Activated CD8-positive, alpha-beta T cell treated with anti-CD3 and anti-CD28 coated beads for 36 hours (primary cell): ENCODE measurements at regions of chr12 and their contacts with region 1.

Region 1: GRCh38 chr12:108618079-108618952 is 15.4 kb downstream of the SELPLG start:
- DNase-seq: peak; percentile 83
- ATAC-seq: peak; percentile 19
- H3K4me3 Mint-ChIP-seq: no peak overlapping the region
- H3K27ac Mint-ChIP-seq: peak overlapping the region; percentile 45
- H3K4me1 Mint-ChIP-seq: peaks cover 47% of the 10 kb centered on the region
- H3K27me3 Mint-ChIP-seq: no peaks in the 10 kb centered on the region
- CTCF ChIP-seq: peak; percentile 99

Region 2: GRCh38 chr12:108367436-108367835 is 250.9 kb before region 1 on chr12:
- CTCF ChIA-PET with region 1: no interaction called
- POLR2A ChIA-PET with region 1: no interaction called
- intact Hi-C with region 1: no loop called
- DNase-seq: no peak
- ATAC-seq: no peak
- H3K4me3 Mint-ChIP-seq: no peak overlapping the region
- H3K27ac Mint-ChIP-seq: no peak overlapping the region
- H3K4me1 Mint-ChIP-seq: no peaks in the 10 kb centered on the region
- H3K27me3 Mint-ChIP-seq: peaks cover 4% of the 10 kb centered on the region
- CTCF ChIP-seq: no peak

Region 3: DNA sequence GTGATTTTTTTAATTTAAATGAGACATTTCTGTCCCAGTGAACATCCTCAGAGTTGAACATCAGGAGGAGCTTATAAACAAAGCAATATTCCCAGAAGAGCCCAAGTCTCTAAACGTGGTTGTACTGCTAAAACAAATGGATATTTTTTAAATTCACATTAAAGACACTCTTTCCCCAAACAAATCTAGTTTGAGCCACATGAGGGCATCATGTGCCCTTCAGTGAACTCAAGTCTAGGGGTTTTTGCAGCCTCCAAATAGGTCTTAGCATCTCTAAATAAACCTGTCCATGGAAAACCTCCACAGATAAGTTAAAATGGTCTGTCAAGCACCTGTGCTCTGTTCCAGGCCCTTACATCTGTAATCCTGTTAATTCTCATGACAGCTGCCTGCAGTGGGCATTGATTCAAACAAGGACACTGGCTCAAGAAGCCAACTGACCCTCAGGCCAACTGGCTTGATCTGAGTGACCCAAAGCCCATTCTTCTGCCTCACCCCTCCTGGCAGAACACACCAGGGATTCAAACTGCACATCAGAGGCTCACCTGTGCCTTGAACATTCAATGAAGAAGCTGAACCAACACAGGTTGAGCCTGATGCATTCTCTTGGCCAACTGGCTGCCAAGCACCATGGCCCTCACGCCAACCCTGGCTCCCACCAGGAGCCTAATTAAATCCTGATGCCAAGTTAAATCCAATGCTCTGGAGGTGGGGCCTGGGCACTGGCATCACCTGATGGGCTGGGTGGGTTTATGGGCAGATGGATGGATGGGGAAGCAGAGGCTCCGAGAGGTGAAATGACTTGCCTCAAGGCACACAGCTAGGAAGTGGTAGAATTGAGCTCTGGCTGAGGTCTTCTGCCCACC is 47.3 kb before region 1 on chr12:
- CTCF ChIA-PET with region 1: interaction called, 645 read pairs
- POLR2A ChIA-PET with region 1: interaction called, 78 read pairs
- intact Hi-C with region 1: loop called (anchors 2 kb)
- DNase-seq: no peak
- ATAC-seq: no peak
- H3K4me3 Mint-ChIP-seq: no peak overlapping the region
- H3K27ac Mint-ChIP-seq: peak overlapping the region; percentile 27
- H3K4me1 Mint-ChIP-seq: peaks cover 90% of the 10 kb centered on the region
- H3K27me3 Mint-ChIP-seq: no peaks in the 10 kb centered on the region
- CTCF ChIP-seq: peak; percentile 41

Region 4: DNA sequence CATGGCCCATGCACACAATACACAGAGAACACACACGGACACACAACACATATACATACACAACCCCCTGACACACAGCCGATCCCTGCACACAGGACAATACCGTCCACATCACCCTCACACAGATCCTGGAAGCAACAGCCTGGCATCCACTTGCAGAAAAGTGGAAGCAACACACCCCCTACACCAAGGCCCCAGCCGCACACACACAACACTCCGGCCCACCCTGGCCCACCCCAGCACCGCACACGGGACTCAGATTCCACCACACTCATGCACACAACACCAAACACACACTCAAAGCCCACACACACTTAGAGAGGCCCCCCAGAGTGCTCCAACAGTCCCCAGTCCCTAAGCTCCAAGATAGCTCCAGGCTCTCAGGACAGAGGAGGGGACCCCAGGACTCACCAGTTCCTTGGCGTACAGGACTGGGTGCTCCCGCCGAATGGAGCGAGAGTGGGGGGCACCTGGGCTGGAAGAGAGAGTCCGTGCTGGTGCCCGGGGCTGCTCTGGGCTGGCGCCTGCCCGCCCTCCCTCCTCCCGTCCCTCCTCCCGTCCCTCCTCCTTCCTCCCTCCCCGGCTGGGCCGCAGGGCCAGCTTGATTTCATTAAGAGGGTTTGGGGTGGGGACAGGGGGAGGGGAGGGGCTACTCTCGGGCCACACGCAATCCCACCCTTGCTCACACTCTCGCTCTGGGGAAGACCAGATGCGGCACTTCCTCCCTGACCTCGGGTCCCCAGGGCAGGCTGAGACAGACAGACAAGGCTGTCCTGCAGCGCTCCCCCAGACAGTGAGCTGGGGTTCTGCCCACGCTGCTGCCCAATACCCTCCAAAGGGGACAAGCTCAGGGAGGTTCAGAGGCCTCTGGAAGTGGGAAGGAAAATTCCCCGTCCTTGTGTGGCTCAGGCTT is 20.5 kb before region 1 on chr12 and contains the start of gene TMEM119:
- CTCF ChIA-PET with region 1: interaction called, 17 read pairs
- POLR2A ChIA-PET with region 1: interaction called, 3 read pairs
- intact Hi-C with region 1: no loop called
- DNase-seq: no peak
- ATAC-seq: no peak
- H3K4me3 Mint-ChIP-seq: no peak within 1 kb of the TSS
- H3K27ac Mint-ChIP-seq: no peak within 1 kb of the TSS
- H3K4me1 Mint-ChIP-seq: no peaks in the 10 kb centered on the region
- H3K27me3 Mint-ChIP-seq: no peaks in the 10 kb centered on the region
- CTCF ChIP-seq: no peak
- total RNA-seq, gene TMEM119: not detected

Region 5: DNA sequence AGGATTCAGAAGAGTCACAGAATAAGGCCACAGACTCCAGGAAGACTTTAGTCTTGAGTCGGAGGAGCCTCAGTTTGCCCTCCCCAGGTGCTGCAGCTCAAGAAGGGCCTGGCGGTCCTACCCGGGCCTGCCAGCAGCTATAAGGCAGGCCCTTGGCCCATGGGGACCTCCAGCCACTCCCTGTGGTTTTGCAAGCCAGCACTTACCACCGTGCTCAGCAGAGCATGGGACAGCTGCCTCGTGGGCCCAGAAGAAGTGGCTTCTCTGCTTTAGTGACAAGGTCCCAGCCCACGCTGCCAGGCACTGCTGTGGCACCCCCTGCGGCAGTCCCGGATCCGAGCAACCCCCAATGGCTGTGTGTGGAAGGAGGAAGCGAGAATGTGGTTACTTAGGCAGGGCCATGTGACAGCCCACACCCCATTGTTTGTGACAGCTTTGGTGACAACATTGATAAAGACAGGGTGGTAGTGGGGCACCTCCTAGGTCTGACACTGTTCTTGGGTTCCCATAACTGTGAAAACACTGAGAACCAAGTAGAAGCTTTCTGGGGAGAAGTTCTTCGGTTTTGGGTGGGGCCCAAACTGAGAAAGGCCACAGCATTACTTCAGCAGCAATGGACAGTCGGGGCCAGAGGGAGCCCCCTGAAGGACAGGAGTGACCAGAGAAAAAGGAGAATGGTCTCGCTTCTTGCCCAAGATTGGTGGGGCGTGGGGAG is 15.4 kb after region 1 on chr12 and contains the start of gene SELPLG:
- CTCF ChIA-PET with region 1: interaction called, 245 read pairs
- POLR2A ChIA-PET with region 1: interaction called, 134 read pairs
- intact Hi-C with region 1: no loop called
- DNase-seq: peak; percentile 94
- ATAC-seq: peak; percentile 52
- H3K4me3 Mint-ChIP-seq: peak within 1 kb of the TSS; percentile 91
- H3K27ac Mint-ChIP-seq: peak within 1 kb of the TSS; percentile 100
- H3K4me1 Mint-ChIP-seq: peaks cover 62% of the 10 kb centered on the region
- H3K27me3 Mint-ChIP-seq: no peaks in the 10 kb centered on the region
- CTCF ChIP-seq: no peak
- total RNA-seq, gene SELPLG: 22.1 to 23.8 TPM

Region 6: GRCh38 chr12:108646600-108647579 is 28.6 kb after region 1 on chr12:
- CTCF ChIA-PET with region 1: interaction called, 16 read pairs
- POLR2A ChIA-PET with region 1: interaction called, 4 read pairs
- intact Hi-C with region 1: no loop called
- DNase-seq: no peak
- ATAC-seq: peak; percentile 47
- H3K4me3 Mint-ChIP-seq: peak overlapping the region; percentile 25
- H3K27ac Mint-ChIP-seq: peak overlapping the region; percentile 62
- H3K4me1 Mint-ChIP-seq: peaks cover 31% of the 10 kb centered on the region
- H3K27me3 Mint-ChIP-seq: no peaks in the 10 kb centered on the region
- CTCF ChIP-seq: no peak

Region 7: GRCh38 chr12:108803428-108804105 is 185.3 kb after region 1 on chr12:
- CTCF ChIA-PET with region 1: interaction called, 29 read pairs
- POLR2A ChIA-PET with region 1: interaction called, 3 read pairs
- intact Hi-C with region 1: no loop called
- DNase-seq: peak; percentile 79
- ATAC-seq: peak; percentile 92
- H3K4me3 Mint-ChIP-seq: no peak overlapping the region
- H3K27ac Mint-ChIP-seq: peak overlapping the region; percentile 73
- H3K4me1 Mint-ChIP-seq: peaks cover 7% of the 10 kb centered on the region
- H3K27me3 Mint-ChIP-seq: no peaks in the 10 kb centered on the region
- CTCF ChIP-seq: peak; percentile 99